ENCODE measurements at regions of chr3 and their contacts with region 1.

Region 1: GRCh38 chr3:191210032-191210431 is 11.0 kb downstream of the OSTN start:
- DNase-seq: no peak
- ATAC-seq: no peak
- H3K4me3 Mint-ChIP-seq: no peak overlapping the region
- H3K27ac Mint-ChIP-seq: no peak overlapping the region
- H3K4me1 Mint-ChIP-seq: peaks cover 6% of the 10 kb centered on the region
- H3K27me3 Mint-ChIP-seq: no peaks in the 10 kb centered on the region
- CTCF ChIP-seq: no peak

Region 2: DNA sequence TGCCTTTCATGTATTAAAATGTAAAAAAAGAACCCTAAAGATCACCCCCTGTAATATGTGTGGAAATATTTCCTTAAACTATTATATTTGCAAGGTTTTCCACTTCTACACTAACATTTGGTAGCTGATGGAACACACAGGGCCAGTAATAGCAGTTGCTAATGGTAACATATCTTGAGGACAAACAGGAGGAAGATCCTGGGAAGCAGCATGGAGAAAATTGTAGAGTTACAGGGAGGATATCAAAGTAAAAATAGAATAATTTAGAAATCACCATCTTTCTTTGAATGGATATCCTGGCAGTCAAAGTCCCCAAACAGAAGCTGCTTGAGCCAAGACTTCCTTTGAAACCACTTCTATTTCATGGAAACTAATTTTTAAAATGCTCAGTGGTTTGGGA is 40.5 kb before region 1 on chr3:
- CTCF ChIA-PET with region 1: no interaction called
- POLR2A ChIA-PET with region 1: no interaction called
- intact Hi-C with region 1: loop called (anchors 2 kb)
- DNase-seq: no peak
- ATAC-seq: no peak
- H3K4me3 Mint-ChIP-seq: no peak overlapping the region
- H3K27ac Mint-ChIP-seq: no peak overlapping the region
- H3K4me1 Mint-ChIP-seq: peaks cover 10% of the 10 kb centered on the region
- H3K27me3 Mint-ChIP-seq: no peaks in the 10 kb centered on the region
- CTCF ChIP-seq: no peak

Measured in activated B cell treated with CpG ODN at 0.5 μM for 24 hours (primary cell).